AG04449 (cell line): ENCODE measurements at regions of chr19 and their contacts with region 1.

Region 1: DNA sequence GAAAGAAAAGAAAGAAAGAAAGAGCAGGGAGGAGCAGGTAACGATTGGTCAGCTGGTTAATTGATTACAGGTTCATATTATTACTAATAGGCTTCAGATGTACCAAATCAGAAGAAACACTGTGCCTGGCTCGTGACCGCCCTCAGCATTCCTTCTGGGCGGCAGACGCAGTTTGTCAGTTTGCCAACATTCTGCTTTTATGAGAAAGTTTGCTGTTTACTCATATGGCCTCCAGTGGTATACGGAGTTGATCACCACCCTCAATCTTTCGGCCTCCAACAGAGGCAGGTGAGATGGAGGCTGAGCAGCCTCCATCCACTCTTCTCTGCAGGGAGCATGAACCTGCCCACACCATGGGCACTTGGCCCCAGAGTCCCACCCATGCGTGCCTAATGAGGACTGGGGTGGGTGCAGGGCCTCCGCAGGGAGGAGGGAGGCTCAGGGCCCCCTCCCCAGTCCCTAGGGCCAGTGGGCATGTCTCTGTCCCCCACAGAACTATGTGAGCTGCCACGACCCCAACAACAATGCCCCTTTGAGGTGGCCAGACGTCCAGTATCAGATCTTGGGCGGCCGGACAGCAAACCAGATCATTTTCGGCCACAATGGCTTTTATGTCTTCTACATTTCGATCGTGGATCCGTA is 8.8 kb downstream of the PRR22 start:
- DNase-seq: no peak
- H3K4me3 ChIP-seq: no peak overlapping the region
- CTCF ChIP-seq: no peak

Region 2: DNA sequence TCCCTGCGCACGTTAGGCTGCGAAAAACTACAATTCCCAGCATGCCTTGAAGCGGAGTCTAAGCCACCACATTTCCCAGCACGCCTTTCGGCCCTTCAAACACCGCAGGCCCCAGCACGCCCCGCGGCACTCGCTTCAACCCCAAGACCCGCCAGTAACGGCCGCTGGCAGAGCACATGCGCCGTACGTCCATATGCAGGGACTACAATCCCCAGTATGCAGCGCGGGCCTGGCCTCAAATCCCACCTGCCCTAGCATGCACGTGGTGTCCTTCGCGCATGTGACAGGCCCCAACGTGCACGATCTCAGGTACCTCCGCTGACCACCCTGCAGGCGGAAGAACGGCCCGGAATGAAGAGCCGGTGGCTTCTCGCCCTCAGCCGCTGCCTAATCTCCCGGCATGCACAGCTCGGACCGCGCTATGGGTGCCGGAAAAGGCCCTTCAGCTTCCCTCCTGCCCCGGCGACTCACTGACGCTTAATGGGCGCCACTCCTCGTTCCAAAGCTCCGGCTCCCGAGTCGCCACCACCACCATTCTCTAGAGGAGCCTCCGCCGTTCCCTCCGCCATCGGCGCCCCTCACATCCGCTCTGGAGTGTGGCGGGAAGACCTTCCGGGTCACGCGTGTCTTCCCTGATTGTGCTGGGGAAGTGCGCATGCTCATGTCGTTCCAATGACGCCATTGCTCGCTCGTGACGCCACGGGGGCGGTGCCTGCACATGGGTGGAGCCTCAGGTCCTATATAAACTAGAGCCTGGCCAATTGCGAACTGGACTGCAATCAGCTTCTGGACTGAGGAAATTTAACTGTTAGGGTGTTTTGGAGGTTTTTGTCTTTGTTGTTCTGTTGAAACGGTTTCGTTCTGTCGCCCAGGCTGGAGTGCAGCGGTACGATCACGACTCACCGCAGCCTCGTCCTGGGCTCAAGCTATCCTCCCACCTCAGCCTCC is 15.1 kb after region 1 on chr19 and contains the start of gene DUS3L:
- CTCF ChIA-PET with region 1: interaction called, 20 read pairs
- POLR2A ChIA-PET with region 1: no interaction called
- DNase-seq: peak; percentile 88
- H3K4me3 ChIP-seq: peak within 1 kb of the TSS; percentile 99
- CTCF ChIP-seq: no peak